ENCODE measurements at regions of chr5 and their contacts with region 1.

Region 1: DNA sequence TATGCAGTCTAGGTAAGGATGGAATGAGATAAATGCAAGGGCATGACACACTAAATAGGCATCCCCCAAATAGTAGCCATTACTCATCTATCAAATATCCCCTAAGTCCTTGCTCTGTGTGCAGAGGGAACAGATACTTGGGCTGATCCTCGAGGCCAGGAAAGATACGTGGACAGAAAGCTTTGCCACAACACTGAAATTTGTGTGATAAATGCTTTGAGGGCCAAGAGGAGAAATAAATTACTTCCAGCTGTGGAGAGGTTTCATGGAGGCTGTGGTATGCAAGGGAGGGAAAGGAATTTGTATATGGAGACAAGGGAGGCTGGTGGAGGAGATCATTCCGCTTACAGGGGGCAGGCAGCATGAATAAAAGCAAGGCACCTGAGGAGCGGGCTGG is 18.5 kb downstream of the ATOX1 start:
- DNase-seq: no peak
- H3K4me3 ChIP-seq: no peak overlapping the region
- H3K27ac ChIP-seq: peak overlapping the region in 2 of 3 donors; percentile 9 to 18
- H3K4me1 ChIP-seq: peaks cover 0 to 9% of the 10 kb centered on the region in 2 donors
- H3K27me3 ChIP-seq: no peaks in the 10 kb centered on the region
- CTCF ChIP-seq: no peak
- POLR2A ChIP-seq: no peak

Region 2: DNA sequence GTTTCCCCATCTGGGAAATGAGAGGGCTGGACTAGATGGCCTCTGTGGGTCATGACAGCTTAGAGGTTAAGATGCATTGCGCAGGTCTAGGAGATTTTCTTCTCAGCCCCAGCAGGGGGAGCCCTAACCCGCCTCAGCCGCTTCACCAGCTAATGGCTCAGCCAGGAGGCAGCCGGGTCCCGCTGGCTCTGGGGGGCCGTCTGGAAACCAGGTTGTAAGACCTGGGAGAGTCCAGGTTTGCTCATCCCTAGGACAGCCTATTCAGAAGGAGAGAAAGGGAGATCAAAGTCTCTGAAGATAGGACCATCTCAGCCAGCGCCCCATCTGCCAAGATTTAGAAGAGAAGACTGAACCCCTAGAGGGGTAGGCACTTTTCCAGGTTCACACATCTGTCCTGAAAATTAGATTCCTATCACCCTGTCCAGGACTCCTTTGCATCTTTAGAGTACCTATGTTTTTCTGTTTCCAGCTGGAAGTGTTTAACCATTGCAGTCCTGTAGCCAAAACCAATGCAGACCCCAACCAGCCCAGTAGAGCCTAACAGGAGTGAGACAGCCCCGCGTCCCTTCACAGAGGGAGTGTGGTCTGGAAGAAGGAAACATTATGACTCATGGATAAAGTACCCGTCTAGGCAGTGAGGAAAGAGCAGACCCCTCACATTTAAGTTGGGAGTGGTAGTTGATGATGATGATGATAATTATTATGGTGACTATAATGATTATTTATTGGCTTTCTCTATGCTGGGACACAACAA is 80.8 kb before region 1 on chr5:
- intact Hi-C with region 1: loop called (anchors 2 kb)
- DNase-seq: peak; percentile 69 to 80
- H3K4me3 ChIP-seq: no peak overlapping the region
- H3K27ac ChIP-seq: no peak overlapping the region
- H3K4me1 ChIP-seq: peaks cover 0 to 5% of the 10 kb centered on the region in 2 donors
- H3K27me3 ChIP-seq: no peaks in the 10 kb centered on the region
- CTCF ChIP-seq: peak; percentile 59 to 90 (median 84)
- POLR2A ChIP-seq: no peak

Measured in thyroid gland (tissue), 4 donors.